WTC11 (cell line): ENCODE measurements at regions of chr16 and their contacts with region 1.

Region 1: GRCh38 chr16:1048442-1049112 is 24.0 kb upstream of the SSTR5 start:
- DNase-seq: peak; percentile 86
- ATAC-seq: peak; percentile 91
- H3K4me3 Mint-ChIP-seq: no peak overlapping the region
- H3K27ac Mint-ChIP-seq: no peak overlapping the region
- H3K4me1 Mint-ChIP-seq: no peaks in the 10 kb centered on the region
- H3K27me3 Mint-ChIP-seq: no peaks in the 10 kb centered on the region
- CTCF ChIP-seq: no peak

Region 2: GRCh38 chr16:1102921-1103635 is 54.5 kb after region 1 on chr16:
- CTCF ChIA-PET with region 1: interaction called, 10 read pairs
- POLR2A ChIA-PET with region 1: no interaction called
- DNase-seq: peak; percentile 73
- ATAC-seq: peak; percentile 45
- H3K4me3 Mint-ChIP-seq: peak overlapping the region; percentile 36
- H3K27ac Mint-ChIP-seq: no peak overlapping the region
- H3K4me1 Mint-ChIP-seq: no peaks in the 10 kb centered on the region
- H3K27me3 Mint-ChIP-seq: no peaks in the 10 kb centered on the region
- CTCF ChIP-seq: peak; percentile 82